Caco-2 (cell line): ENCODE measurements at regions of chr5 and their contacts with region 1.

Region 1: DNA sequence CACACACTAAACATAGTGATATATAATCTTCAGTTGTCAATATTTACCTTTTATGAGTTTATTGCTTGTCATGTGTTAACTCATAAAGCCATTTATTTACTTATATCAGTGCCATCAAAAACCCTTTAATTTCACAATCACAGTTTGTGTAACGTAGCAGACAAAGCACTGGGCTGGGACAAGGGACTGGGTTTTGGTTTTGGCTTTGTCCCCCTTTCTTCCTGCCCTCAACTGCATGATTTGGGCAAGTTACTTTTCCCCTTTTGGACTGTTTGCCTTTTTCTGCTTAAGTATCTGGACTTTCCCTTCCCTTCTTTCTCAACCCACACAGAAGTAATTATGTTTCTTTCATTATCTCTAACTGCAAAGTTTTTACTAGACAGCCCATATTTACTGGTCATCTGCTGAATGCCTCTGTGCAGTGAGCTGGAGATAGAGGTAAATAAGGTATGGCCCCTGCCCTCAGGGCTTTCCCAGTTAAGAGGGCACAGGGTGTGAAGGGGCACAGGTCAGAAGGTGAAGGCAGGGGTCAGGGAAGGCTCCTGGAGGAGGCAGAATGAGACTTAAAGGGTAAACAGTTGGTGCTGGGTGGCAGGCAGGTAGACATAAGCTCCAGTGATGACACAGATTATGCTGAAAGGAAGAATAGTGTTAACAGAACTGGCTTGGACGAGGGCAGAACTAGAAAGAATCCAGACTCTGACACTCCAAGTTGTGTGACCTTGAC is 14.8 kb upstream of the NR3C1 start:
- DNase-seq: peak; percentile 59 to 73
- H3K4me3 ChIP-seq: no peak overlapping the region
- H3K4me3 Mint-ChIP-seq: peak overlapping the region; percentile 4
- H3K27ac Mint-ChIP-seq: peak overlapping the region; percentile 27
- H3K4me1 ChIP-seq: peaks cover 33% of the 10 kb centered on the region
- H3K4me1 Mint-ChIP-seq: peaks cover 28% of the 10 kb centered on the region
- H3K27me3 ChIP-seq: no peaks in the 10 kb centered on the region
- H3K27me3 Mint-ChIP-seq: no peaks in the 10 kb centered on the region
- CTCF ChIP-seq: no peak

Region 2: GRCh38 chr5:143495821-143496275 is 77.5 kb after region 1 on chr5:
- CTCF ChIA-PET with region 1: no interaction called
- POLR2A ChIA-PET with region 1: no interaction called
- intact Hi-C with region 1: loop called (anchors 5 kb)
- DNase-seq: no peak
- H3K4me3 ChIP-seq: no peak overlapping the region
- H3K4me3 Mint-ChIP-seq: no peak overlapping the region
- H3K27ac Mint-ChIP-seq: no peak overlapping the region
- H3K4me1 ChIP-seq: peaks cover 33% of the 10 kb centered on the region
- H3K4me1 Mint-ChIP-seq: peaks cover 16% of the 10 kb centered on the region
- H3K27me3 ChIP-seq: no peaks in the 10 kb centered on the region
- H3K27me3 Mint-ChIP-seq: no peaks in the 10 kb centered on the region
- CTCF ChIP-seq: no peak

Region 3: GRCh38 chr5:143554918-143555519 is 136.7 kb after region 1 on chr5:
- CTCF ChIA-PET with region 1: no interaction called
- POLR2A ChIA-PET with region 1: no interaction called
- intact Hi-C with region 1: loop called (anchors 1 kb)
- DNase-seq: peak; percentile 53 to 64
- H3K4me3 ChIP-seq: no peak overlapping the region
- H3K4me3 Mint-ChIP-seq: no peak overlapping the region
- H3K27ac Mint-ChIP-seq: peak overlapping the region; percentile 79
- H3K4me1 ChIP-seq: peaks cover 15% of the 10 kb centered on the region
- H3K4me1 Mint-ChIP-seq: peaks cover 20% of the 10 kb centered on the region
- H3K27me3 ChIP-seq: no peaks in the 10 kb centered on the region
- H3K27me3 Mint-ChIP-seq: no peaks in the 10 kb centered on the region
- CTCF ChIP-seq: no peak

Region 4: GRCh38 chr5:143673676-143674447 is 255.6 kb after region 1 on chr5:
- CTCF ChIA-PET with region 1: no interaction called
- POLR2A ChIA-PET with region 1: no interaction called
- intact Hi-C with region 1: loop called (anchors 5 kb)
- DNase-seq: peak in 1 of 2 experiments; percentile 35
- H3K4me3 ChIP-seq: no peak overlapping the region
- H3K4me3 Mint-ChIP-seq: peak overlapping the region; percentile 27
- H3K27ac Mint-ChIP-seq: peak overlapping the region; percentile 91
- H3K4me1 ChIP-seq: peaks cover 40% of the 10 kb centered on the region
- H3K4me1 Mint-ChIP-seq: peaks cover 46% of the 10 kb centered on the region
- H3K27me3 ChIP-seq: no peaks in the 10 kb centered on the region
- H3K27me3 Mint-ChIP-seq: no peaks in the 10 kb centered on the region
- CTCF ChIP-seq: no peak